ENCODE measurements at regions of chr20 and their contacts with region 1.

Region 1: GRCh38 chr20:33862709-33863403 is 51.7 kb downstream of the CHMP4B start:
- DNase-seq: peak; percentile 90
- H3K4me3 ChIP-seq: peak overlapping the region; percentile 20
- H3K27ac ChIP-seq: peak overlapping the region; percentile 56
- H3K4me1 ChIP-seq: peaks cover 70% of the 10 kb centered on the region
- CTCF ChIP-seq: peak; percentile 87

Region 2: GRCh38 chr20:33460711-33461110 is 402.1 kb before region 1 on chr20:
- CTCF ChIA-PET with region 1: no interaction called
- POLR2A ChIA-PET with region 1: no interaction called
- intact Hi-C with region 1: no loop called
- DNase-seq: peak; percentile 80
- H3K4me3 ChIP-seq: no peak overlapping the region
- H3K27ac ChIP-seq: peak overlapping the region; percentile 59
- H3K4me1 ChIP-seq: peaks cover 31% of the 10 kb centered on the region
- CTCF ChIP-seq: no peak

Region 3: DNA sequence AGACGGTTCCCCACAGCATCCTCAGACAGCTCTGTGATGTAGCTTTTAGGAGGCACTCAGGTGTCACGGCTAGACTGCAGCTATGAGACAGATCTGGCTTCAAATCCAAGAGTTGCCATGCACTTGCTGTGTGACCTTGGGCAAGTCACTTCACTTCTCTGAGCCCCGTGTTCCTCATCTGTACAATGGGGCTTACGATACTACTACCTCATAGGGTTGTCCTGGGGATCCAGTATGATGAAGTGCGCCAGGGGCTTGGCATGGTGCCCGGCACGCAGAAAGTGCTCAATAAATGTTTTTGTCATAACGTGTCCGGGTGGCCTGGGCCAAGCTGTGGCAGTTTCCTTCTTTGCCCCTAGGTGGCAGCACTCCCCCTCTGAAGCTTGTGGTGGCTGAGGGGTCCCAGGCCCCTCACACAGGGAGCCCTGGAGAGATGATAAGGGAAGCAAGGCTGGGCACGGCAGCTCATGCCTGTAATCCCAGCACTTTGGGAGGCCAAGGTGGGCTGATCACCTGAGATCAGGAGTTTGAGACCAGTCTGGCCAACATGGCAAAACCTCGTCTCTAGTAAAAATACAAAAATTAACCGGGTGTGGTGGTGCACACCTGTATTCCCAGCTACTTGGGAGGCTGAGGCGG is 70.8 kb before region 1 on chr20:
- CTCF ChIA-PET with region 1: no interaction called
- POLR2A ChIA-PET with region 1: interaction called, 3 read pairs
- intact Hi-C with region 1: loop called (anchors 2 kb)
- DNase-seq: peak; percentile 59
- H3K4me3 ChIP-seq: no peak overlapping the region
- H3K27ac ChIP-seq: no peak overlapping the region
- H3K4me1 ChIP-seq: peaks cover 7% of the 10 kb centered on the region
- CTCF ChIP-seq: peak; percentile 91

Region 4: GRCh38 chr20:33915726-33916331 is 53.0 kb after region 1 on chr20:
- CTCF ChIA-PET with region 1: interaction called, 30 read pairs
- POLR2A ChIA-PET with region 1: interaction called, 7 read pairs
- intact Hi-C with region 1: loop called (anchors 1 kb)
- DNase-seq: peak; percentile 58
- H3K4me3 ChIP-seq: no peak overlapping the region
- H3K27ac ChIP-seq: peak overlapping the region; percentile 74
- H3K4me1 ChIP-seq: peaks cover 83% of the 10 kb centered on the region
- CTCF ChIP-seq: peak; percentile 89

Region 5: GRCh38 chr20:34022154-34022838 is 159.4 kb after region 1 on chr20:
- CTCF ChIA-PET with region 1: interaction called, 9 read pairs
- POLR2A ChIA-PET with region 1: no interaction called
- intact Hi-C with region 1: loop called (anchors 1 kb)
- DNase-seq: peak; percentile 68
- H3K4me3 ChIP-seq: no peak overlapping the region
- H3K27ac ChIP-seq: peak overlapping the region; percentile 36
- H3K4me1 ChIP-seq: peaks cover 56% of the 10 kb centered on the region
- CTCF ChIP-seq: peak; percentile 82

Region 6: GRCh38 chr20:34069341-34070078 is 206.7 kb after region 1 on chr20:
- CTCF ChIA-PET with region 1: interaction called, 19 read pairs
- POLR2A ChIA-PET with region 1: no interaction called
- intact Hi-C with region 1: loop called (anchors 1 kb)
- DNase-seq: peak; percentile 84
- H3K4me3 ChIP-seq: no peak overlapping the region
- H3K27ac ChIP-seq: peak overlapping the region; percentile 38
- H3K4me1 ChIP-seq: peaks cover 21% of the 10 kb centered on the region
- CTCF ChIP-seq: peak; percentile 93